H1 (cell line): ENCODE measurements at regions of chr1 and their contacts with region 1.

Region 1: GRCh38 chr1:40691538-40692428 is at the start of gene NFYC:
- DNase-seq: peak; percentile 97
- H3K4me3 ChIP-seq: peak within 1 kb of the TSS; percentile 67 to 82 (median 80)
- H3K27ac ChIP-seq: peak within 1 kb of the TSS; percentile 100
- H3K4me1 ChIP-seq: peaks cover 0 to 9% (median 7%) of the 10 kb centered on the region in 4 experiments; a peak in 6 of 7 replicates
- H3K27me3 ChIP-seq: no peaks in the 10 kb centered on the region
- CTCF ChIP-seq: no peak
- EP300 ChIP-seq: peak in 1 of 2 experiments; percentile 3; a peak in 1 of 3 replicates
- POLR2A ChIP-seq: peak; percentile 93 to 96
- RAD21 ChIP-seq: 0 out of 4 replicates have a peak, but pooled peaks of 1 of the 2 experiments have one; percentile 1
- total RNA-seq, gene NFYC: 51.1 and 54.1 TPM in 2 replicates

Region 2: DNA sequence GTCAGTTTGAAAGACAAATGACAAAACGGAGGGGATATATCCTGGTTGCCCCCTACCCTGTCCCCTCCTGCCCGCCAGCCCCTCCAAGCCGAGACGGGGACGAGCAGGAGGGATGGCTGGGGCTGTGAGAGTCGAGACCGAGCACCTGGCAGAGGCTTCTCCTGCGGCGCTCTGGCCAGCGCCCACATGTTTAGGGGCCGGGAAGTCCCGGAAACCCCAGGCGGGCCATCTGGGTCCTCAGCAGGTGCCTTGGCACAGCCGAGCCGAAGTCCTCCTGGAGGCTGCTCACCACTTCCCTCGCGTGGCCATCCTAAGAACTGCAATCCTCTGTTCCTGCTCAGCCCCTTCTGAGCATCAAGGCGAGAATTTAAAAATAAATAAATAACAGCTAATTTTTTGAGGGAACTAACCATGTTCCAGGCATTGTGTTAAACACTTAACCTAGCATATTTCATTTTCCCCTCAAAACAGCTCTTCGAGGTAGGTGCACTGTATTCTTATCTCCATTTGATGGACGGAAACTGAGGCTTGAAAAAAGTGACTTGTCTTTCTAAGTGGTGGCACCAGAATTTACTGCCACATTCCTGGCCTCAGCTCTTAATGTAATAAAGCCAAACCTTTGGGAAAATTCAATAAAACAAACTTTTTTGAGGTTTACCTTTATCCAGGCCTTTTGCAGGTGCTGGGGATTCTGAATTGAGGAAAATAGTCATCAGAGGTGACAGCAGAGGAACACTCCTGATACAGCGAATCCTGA is 22.8 kb before region 1 on chr1:
- CTCF ChIA-PET with region 1: interaction called, 12 read pairs
- POLR2A ChIA-PET with region 1: interaction called, 63 read pairs
- DNase-seq: peak; percentile 63 to 96
- H3K4me3 ChIP-seq: peak overlapping the region in 2 of 4 experiments; percentile 27 to 54; a peak in 4 of 8 replicates
- H3K27ac ChIP-seq: no peak overlapping the region
- H3K4me1 ChIP-seq: peaks cover 0 to 9% (median 7%) of the 10 kb centered on the region in 4 experiments; a peak in 6 of 7 replicates
- H3K27me3 ChIP-seq: no peaks in the 10 kb centered on the region; a peak in 2 of 7 replicates
- CTCF ChIP-seq: peak; percentile 83 to 91 (median 87)
- EP300 ChIP-seq: no peak
- POLR2A ChIP-seq: no peak
- RAD21 ChIP-seq: peak; percentile 73 to 82

Region 3: GRCh38 chr1:40709100-40709801 is 17.5 kb after region 1 on chr1:
- CTCF ChIA-PET with region 1: interaction called, 5 read pairs
- POLR2A ChIA-PET with region 1: interaction called, 293 read pairs
- DNase-seq: peak; percentile 71 to 75
- H3K4me3 ChIP-seq: peak overlapping the region; percentile 72 to 89 (median 80)
- H3K27ac ChIP-seq: peak overlapping the region; percentile 82
- H3K4me1 ChIP-seq: peaks cover 0 to 8% (median 5%) of the 10 kb centered on the region in 4 experiments; a peak in 4 of 7 replicates
- H3K27me3 ChIP-seq: no peaks in the 10 kb centered on the region
- CTCF ChIP-seq: no peak
- EP300 ChIP-seq: no peak
- POLR2A ChIP-seq: peak; percentile 71 to 91
- RAD21 ChIP-seq: no peak

Region 4: DNA sequence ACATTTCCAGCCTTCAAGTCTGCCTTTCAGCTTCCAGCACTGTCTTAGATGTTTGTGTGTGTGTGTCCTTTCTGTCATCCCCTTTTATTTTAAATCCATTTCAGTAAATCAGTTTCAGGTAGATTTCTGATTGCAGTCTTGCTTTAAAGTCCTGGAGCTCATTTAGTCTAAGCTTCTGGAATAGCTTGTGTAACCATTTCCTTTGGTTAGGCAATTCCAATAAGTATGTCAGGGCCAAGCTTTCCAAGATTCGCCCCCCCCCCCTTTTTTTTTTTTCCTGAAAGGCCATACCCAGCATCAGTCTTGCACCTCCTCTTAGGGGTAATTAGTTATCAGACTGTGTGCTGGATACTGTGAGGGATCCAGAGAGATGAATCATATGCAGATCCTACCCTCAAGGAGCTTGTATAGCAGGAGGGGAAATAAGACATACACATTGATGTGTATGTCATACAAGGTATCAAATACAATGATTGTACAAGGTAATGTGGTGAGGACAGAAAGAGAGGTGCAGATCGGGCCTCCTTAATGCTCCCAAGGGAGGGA is 41.0 kb after region 1 on chr1:
- CTCF ChIA-PET with region 1: no interaction called
- POLR2A ChIA-PET with region 1: interaction called, 12 read pairs
- DNase-seq: no peak
- H3K4me3 ChIP-seq: no peak overlapping the region
- H3K27ac ChIP-seq: no peak overlapping the region
- H3K4me1 ChIP-seq: no peaks in the 10 kb centered on the region; a peak in 1 of 7 replicates
- H3K27me3 ChIP-seq: no peaks in the 10 kb centered on the region
- CTCF ChIP-seq: no peak
- EP300 ChIP-seq: no peak
- POLR2A ChIP-seq: no peak
- RAD21 ChIP-seq: no peak

Region 5: GRCh38 chr1:40755067-40755466 is 63.3 kb after region 1 on chr1:
- CTCF ChIA-PET with region 1: no interaction called
- POLR2A ChIA-PET with region 1: interaction called, 10 read pairs
- DNase-seq: no peak
- H3K4me3 ChIP-seq: no peak overlapping the region
- H3K27ac ChIP-seq: no peak overlapping the region
- H3K4me1 ChIP-seq: no peaks in the 10 kb centered on the region
- H3K27me3 ChIP-seq: no peaks in the 10 kb centered on the region
- CTCF ChIP-seq: no peak
- EP300 ChIP-seq: no peak
- POLR2A ChIP-seq: no peak
- RAD21 ChIP-seq: no peak